Activated CD8-positive, alpha-beta T cell treated with anti-CD3 and anti-CD28 coated beads, Interleukin-2, amount 10 ng/mL, durations not matched to agents 7 days and 5 days (primary cell): ENCODE measurements at regions of chr1 and their contacts with region 1.

Region 1: DNA sequence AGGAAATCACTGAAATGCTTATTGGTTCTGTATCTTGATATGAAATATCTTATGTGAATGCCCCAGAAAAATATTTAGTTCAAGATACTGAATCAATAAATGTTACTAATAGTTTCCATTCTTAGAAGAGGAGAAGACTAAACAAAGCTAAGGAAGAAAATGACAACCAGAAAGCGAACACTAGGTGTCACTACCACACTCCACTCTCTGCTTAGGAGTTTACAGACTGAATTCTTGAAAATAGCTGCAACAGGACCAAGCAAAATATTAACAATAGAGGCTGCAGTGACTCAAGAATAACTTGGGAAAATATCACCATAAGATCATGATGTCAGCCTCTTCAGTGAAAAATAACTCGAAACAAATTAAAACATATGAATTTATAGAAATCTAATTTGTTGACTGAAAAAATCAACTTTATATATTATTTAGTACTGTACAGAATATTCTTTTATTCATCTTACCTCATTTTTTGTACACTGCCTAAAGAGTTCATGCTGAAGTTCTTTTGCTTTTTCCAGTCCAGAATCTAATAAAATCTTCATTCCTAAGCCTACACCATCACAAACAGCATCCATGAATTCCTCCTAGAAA is 61.6 kb downstream of the KIF14 start:
- DNase-seq: peak; percentile 30
- ATAC-seq: no peak
- H3K4me3 Mint-ChIP-seq: no peak overlapping the region
- H3K27ac Mint-ChIP-seq: no peak overlapping the region
- H3K4me1 Mint-ChIP-seq: peaks cover 3% of the 10 kb centered on the region
- H3K27me3 Mint-ChIP-seq: no peaks in the 10 kb centered on the region

Region 2: DNA sequence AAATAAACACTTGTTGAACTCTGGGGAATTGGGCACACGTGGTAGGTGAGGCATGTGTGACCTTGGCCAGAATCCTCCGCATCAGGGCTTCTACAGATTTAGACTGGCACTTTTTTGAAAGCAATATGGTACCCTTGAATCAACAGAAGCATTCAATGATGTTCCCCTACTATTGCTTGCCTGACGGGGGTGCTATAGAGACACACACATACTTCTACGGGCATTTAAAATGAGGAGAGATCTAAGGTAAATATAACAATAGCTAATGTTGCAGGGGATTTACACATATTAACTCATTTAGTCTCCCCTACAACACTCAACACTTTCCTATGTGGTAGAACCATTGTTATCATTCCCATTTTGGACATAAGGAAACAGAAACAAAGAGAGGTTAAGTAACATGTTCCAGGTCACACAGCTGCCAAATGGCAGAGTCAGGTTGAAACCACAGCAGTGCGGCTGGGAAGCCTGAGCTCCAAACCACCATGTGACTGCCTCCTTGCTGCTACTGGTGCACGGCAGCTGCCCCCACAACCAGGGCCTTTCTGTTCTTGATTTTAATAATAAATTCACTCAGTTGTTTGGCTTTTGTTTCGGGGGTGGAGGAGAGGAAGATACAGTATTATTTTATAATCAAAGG is 296.5 kb before region 1 on chr1:
- CTCF ChIA-PET with region 1: no interaction called
- POLR2A ChIA-PET with region 1: no interaction called
- DNase-seq: no peak
- ATAC-seq: no peak
- H3K4me3 Mint-ChIP-seq: no peak overlapping the region
- H3K27ac Mint-ChIP-seq: no peak overlapping the region
- H3K4me1 Mint-ChIP-seq: no peaks in the 10 kb centered on the region
- H3K27me3 Mint-ChIP-seq: peaks cover 10% of the 10 kb centered on the region

Region 3: DNA sequence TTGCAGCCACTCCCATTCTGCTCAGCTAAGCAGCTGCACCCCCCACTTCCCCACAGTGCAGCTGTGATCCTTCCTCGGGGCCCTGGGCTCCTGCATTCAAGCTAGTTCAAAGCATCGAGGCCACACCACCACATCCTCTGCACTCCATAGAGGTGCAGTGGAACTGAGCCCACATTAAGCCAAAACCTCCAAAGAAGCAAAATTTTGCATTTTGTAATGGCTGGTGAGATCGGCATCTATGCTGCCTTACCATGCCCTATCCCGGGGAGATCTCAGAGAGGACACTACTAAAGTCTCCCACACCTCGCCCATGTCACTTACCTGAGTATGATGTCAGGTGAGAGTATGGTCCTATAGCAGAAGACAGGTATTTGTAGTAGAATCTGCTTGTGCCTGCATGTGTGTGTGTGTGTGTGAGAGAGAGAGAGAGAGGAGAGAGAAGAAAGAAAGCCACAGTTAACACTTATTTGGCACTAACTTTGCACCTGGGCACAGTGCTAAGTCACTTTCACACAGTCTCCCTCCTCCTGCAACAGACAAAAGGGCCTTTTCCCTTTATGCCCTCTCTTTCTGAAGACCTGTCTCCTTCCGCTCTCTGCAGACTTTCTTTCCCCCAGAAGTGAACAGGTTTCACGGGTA is 28.2 kb before region 1 on chr1:
- CTCF ChIA-PET with region 1: interaction called, 11 read pairs
- POLR2A ChIA-PET with region 1: no interaction called
- DNase-seq: peak; percentile 83
- ATAC-seq: peak; percentile 97
- H3K4me3 Mint-ChIP-seq: peak overlapping the region; percentile 32
- H3K27ac Mint-ChIP-seq: peak overlapping the region; percentile 80
- H3K4me1 Mint-ChIP-seq: peaks cover 21% of the 10 kb centered on the region
- H3K27me3 Mint-ChIP-seq: no peaks in the 10 kb centered on the region